Psoas muscle (tissue), 8 donors: ENCODE measurements at regions of chr11 and their contacts with region 1.

Region 1: DNA sequence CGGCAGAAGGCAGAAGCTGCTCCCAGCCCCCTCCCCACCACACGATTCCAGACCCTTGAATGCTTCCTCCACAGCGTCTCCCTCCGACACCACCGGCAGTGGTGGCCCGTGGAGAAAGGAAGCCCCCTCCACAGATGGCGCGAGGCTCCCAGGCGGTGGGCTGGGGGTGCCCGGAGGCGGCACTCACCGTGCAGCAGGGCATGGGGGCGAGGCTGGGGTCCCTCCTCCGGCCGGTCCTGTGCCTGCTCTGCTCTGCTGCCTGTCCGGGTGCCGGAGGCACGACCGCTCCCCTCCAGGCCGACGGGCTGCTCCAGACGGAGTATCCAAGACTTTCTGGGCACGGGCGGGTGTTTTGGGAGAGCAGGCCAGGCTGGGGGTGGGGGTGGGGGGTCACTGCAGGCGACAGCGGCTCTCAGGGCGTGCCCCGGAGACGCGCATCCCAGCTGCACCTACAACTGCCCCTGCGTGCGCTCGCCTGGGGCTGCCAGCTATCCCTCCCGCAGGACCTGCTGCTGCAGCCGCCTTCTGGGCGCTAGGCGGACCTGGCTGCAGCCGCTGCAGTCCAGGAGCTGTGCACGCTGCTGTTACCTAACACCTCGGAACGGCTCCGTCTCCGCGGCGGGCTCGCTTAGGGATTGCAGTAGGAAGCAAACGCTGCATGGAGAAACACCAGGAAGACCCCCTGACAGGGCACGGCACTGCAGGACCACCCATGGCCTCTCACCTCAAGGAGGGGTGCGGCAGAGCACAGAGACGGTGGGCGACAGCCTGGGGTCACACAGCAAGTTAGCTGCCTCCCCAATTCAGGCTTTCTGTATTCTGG is 15.2 kb downstream of the MRGPRG start:
- DNase-seq: peak in 1 of 2 donors; percentile 49
- ATAC-seq: peak in 3 of 4 donors; percentile 37 to 60 (median 57)
- H3K4me3 ChIP-seq: no peak overlapping the region
- H3K27ac ChIP-seq: no peak overlapping the region
- H3K4me1 ChIP-seq: no peaks in the 10 kb centered on the region
- H3K27me3 ChIP-seq: peaks cover 0 to 38% (median 21%) of the 10 kb centered on the region in 3 donors
- CTCF ChIP-seq: no peak

Region 2: GRCh38 chr11:3021125-3021524 is 182.3 kb before region 1 on chr11:
- intact Hi-C with region 1: no loop called
- DNase-seq: no peak
- ATAC-seq: peak; percentile 65 to 78 (median 70)
- H3K4me3 ChIP-seq: no peak overlapping the region
- H3K27ac ChIP-seq: no peak overlapping the region
- H3K4me1 ChIP-seq: no peaks in the 10 kb centered on the region
- H3K27me3 ChIP-seq: no peaks in the 10 kb centered on the region
- CTCF ChIP-seq: peak; percentile 37

Region 3: DNA sequence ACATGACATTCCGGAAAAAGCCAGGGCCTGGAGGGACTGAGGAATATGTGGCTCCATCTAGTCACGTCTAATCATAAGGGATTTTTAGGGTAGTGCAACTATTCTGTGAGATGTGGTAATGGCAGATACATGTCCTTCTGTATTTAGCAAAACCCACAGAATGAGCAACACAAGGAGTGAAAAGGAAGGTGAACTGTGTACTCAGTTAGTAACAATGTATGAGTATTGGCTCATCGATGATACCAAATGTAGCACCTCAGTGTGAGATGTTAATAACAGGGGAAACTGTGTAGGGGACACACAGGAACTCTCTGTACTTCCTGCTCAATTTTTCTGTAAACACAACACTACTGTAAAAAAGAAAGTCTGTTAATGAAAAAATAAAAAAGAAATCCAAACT is 104.3 kb before region 1 on chr11:
- intact Hi-C with region 1: no loop called
- DNase-seq: no peak
- ATAC-seq: no peak
- H3K4me3 ChIP-seq: no peak overlapping the region
- H3K27ac ChIP-seq: no peak overlapping the region
- H3K4me1 ChIP-seq: no peaks in the 10 kb centered on the region
- H3K27me3 ChIP-seq: no peaks in the 10 kb centered on the region
- CTCF ChIP-seq: no peak

Region 4: GRCh38 chr11:3109921-3110706 is 93.3 kb before region 1 on chr11:
- intact Hi-C with region 1: no loop called
- DNase-seq: peak; percentile 46 to 82
- ATAC-seq: peak; percentile 86 to 97 (median 96)
- H3K4me3 ChIP-seq: no peak overlapping the region
- H3K27ac ChIP-seq: no peak overlapping the region
- H3K4me1 ChIP-seq: no peaks in the 10 kb centered on the region
- H3K27me3 ChIP-seq: no peaks in the 10 kb centered on the region
- CTCF ChIP-seq: peak; percentile 78

Region 5: DNA sequence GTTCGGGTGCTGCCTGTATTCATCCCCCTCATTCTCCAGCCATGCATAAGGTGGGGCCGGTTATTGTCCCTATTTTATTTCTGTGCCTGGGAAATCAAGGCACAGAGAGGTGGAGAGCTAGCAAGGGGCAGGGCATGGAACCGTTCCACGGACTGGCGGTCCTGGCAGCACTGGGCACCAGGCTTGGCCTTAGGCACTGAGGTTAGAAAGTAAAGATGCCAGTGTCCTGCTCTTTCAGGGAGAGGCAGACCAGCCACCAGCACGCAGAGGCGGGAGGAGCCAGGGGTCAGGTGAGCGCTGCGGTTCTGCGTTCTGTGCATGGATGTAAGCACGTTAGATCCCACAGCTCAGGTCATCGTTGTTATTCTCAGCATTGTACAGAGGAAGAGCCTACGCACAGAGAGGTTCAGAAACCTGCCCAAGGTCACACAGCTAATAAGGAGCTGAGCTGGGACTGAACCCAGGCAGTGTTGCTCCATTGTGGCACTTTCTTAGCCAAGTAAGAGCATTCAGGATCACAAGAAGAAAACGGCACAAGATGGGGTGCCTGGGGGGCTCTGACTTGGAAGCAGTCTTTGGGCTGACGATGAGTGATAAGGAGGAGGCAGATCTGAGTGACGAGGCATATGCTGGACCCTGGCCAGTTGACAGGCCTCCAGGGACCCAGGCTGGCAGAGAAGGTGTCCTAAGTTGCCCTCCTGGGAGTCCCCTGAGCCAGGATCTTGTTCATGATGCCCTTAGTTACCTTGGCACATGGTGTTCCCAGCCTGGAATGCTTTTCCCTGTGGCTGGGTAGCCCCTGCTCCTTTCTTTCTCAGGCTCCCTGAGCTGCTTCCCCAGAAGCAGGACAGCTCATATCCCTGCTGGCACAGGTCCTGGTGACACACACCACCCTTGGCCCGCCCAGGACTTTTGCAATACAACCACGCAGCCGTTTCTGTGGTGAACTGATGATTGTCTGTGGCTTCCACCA is 79.4 kb before region 1 on chr11:
- intact Hi-C with region 1: loop called in 1 of 2 experiments (anchors 5 kb)
- DNase-seq: peak; percentile 92 to 94
- ATAC-seq: peak; percentile 83 to 90 (median 88)
- H3K4me3 ChIP-seq: no peak overlapping the region
- H3K27ac ChIP-seq: peak overlapping the region; percentile 76
- H3K4me1 ChIP-seq: peaks cover 23% of the 10 kb centered on the region
- H3K27me3 ChIP-seq: no peaks in the 10 kb centered on the region
- CTCF ChIP-seq: no peak

Region 6: DNA sequence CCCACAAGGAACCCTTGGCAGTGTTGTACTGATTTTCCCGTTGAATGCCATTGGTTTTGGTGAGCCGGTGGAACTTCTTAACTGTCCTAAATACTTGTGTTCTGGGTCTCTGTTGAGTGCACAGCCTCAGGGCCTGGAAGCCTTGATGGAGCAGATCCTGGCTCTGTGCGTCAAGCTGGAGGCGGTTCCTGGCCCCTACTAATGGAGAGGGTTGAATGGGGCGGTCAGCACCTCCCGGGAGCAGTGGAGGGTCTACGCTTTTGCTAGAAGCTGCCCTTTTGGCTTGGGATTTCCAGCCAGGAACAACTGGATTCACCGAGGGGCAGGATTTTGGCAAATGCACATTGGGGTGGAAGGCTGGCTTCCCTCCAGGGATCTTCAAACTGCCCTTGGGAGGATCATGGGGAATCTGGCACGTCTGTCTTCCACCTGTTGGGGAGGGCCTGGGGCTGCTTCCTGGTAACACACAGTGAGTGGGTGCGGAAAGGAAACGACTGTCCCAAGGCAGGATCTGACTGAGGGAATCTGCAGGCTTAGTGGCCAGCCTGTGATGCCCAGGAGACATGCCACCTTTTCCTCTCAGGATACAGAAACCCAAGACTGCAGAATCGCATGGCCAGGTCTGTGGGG is 31.4 kb before region 1 on chr11:
- intact Hi-C with region 1: loop called in 1 of 2 experiments (anchors 1 kb)
- DNase-seq: peak in 1 of 2 donors; percentile 44
- ATAC-seq: no peak
- H3K4me3 ChIP-seq: no peak overlapping the region
- H3K27ac ChIP-seq: no peak overlapping the region
- H3K4me1 ChIP-seq: peaks cover 12% of the 10 kb centered on the region
- H3K27me3 ChIP-seq: no peaks in the 10 kb centered on the region
- CTCF ChIP-seq: no peak

Region 7: GRCh38 chr11:3824714-3825472 is 621.5 kb after region 1 on chr11:
- intact Hi-C with region 1: no loop called
- DNase-seq: peak; percentile 62 to 78
- ATAC-seq: peak; percentile 53 to 77 (median 65)
- H3K4me3 ChIP-seq: no peak overlapping the region
- H3K27ac ChIP-seq: no peak overlapping the region
- H3K4me1 ChIP-seq: no peaks in the 10 kb centered on the region
- H3K27me3 ChIP-seq: no peaks in the 10 kb centered on the region
- CTCF ChIP-seq: peak; percentile 46